H1 (cell line): ENCODE measurements at regions of chr17 and their contacts with region 1.

Region 1: DNA sequence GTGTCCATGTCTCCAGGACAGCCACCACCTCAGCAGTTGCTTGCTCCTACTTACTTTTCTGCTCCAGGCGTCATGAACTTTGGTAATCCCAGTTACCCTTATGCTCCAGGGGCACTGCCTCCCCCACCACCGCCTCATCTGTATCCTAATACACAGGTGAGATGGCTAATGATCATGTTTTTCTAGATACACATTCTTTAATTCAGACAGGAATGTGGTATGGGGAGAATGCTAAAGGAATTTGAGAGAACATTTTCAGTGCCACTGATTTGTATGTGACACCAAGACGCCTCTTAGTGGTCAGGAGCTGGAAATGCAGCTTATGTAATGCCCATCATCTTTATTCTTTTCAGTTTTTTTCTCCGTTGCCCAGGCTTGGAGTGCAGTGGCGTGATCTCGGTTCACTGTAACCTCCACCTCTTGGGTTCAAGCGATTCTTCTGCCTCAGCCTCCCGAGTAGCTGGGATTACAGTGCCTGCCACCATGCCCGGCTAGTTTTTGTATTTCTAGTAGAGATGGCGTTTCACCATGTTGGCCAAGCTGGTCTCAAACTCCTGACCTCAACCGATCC is 8.9 kb upstream of the RAPGEFL1 start:
- DNase-seq: peak in 1 of 2 experiments; percentile 59
- H3K4me3 ChIP-seq: no peak overlapping the region
- H3K27ac ChIP-seq: 0 out of 2 replicates have a peak overlapping the region, but pooled peaks have one; percentile 62
- H3K4me1 ChIP-seq: peaks cover 0 to 6% (median 0%) of the 10 kb centered on the region in 4 experiments; a peak in 2 of 7 replicates
- H3K27me3 ChIP-seq: no peaks in the 10 kb centered on the region
- CTCF ChIP-seq: peak in 2 of 3 experiments; percentile 51 to 77; a peak in 3 of 4 replicates
- EP300 ChIP-seq: peak in 1 of 2 experiments; percentile 36; a peak in 1 of 3 replicates
- POLR2A ChIP-seq: no peak
- RAD21 ChIP-seq: peak; percentile 59 to 63

Region 2: DNA sequence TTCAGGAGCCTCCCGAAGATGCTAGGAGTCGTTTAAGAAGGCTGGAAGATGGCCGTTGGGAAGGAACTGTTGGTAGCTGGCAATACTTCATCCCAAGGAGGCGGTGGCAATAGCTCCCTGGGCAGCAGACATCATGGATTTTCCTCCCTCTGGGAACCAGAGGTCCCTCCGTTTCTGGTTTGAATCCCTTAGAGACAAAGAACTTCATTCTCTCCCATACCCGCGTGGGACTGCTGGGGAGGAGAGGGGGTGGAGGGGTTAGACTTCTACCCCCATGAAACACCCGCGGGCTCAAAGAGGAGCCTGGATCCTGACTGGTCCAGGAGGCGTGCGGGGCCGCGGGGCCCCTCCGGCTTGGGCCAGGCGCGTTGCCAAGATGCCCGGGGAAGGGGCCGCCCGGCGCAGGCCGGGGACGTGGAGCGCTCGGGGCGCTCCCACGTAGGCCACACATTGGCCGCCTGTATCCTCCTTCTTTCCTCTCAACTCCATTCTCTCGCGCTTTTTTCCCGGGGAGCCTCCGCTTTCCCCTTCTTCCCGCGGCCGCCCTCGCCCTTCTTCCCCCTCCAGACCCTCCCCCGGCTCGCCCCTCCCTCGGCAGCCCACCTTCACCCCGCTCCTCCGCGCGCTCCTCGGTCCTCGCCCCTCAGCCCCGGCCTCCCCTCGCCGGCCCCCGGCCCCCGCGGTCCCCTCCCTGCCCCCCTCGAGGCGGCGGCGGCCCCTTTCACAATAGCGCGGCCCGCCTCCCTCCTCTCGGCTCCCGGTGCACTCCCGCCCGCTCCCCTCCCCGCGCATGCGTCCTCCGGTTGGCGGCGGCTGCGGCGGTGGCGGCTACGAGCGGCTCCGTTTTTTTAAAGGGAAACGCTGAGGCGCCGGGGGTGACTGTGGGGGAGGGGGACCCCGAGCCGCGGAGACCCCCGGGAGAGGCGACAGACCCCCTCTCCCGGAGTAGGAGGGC is 46.9 kb before region 1 on chr17 and contains the start of gene MSL1:
- CTCF ChIA-PET with region 1: interaction called, 8 read pairs
- POLR2A ChIA-PET with region 1: interaction called, 22 read pairs
- DNase-seq: peak in 1 of 2 experiments; percentile 88
- H3K4me3 ChIP-seq: peak within 1 kb of the TSS; percentile 80 to 91 (median 86)
- H3K27ac ChIP-seq: peak within 1 kb of the TSS; percentile 84
- H3K4me1 ChIP-seq: peaks cover 0 to 3% (median under 1%) of the 10 kb centered on the region in 4 experiments; a peak in 2 of 7 replicates
- H3K27me3 ChIP-seq: no peaks in the 10 kb centered on the region; a peak in 1 of 7 replicates
- CTCF ChIP-seq: no peak
- EP300 ChIP-seq: 0 out of 3 replicates have a peak, but pooled peaks of 1 of the 2 experiments have one; percentile 8
- POLR2A ChIP-seq: peak in 1 of 2 experiments; percentile 37; a peak in 1 of 3 replicates
- RAD21 ChIP-seq: no peak
- total RNA-seq, gene MSL1: 66.5 and 69.2 TPM in 2 replicates

Region 3: DNA sequence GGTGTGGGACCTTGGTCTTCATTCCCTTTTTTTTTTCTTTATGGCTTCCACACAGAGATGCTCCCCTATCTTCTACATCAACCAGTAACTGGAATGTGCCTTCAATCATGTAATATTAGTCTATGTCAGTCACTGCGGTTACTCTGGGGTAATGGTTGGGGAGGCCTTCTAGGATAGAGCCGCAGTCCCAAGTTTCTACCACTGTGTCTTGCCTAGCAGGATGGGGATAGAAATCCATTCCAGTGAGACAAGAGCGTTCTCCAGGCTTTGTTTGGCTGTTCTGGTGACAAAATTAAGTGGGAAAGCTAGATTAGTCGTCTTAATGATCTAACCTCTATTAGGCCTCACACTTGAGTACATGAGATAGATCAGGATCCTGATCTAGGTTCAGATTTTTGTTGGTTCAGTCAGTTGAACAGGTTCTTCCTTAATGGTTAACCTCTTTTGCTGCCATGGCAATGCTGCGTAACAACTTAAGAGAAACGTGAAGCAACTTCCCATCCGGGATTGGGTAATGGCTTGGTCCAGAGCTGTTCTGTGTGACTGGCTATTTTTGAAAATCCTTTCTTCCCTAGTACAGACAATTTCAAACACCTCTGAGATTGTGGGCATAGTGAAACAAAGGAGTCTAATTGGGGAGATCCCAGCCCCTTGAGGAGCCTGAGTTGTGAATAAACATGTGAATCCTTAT is 37.9 kb before region 1 on chr17:
- CTCF ChIA-PET with region 1: interaction called, 8 read pairs
- POLR2A ChIA-PET with region 1: interaction called, 11 read pairs
- DNase-seq: no peak
- H3K4me3 ChIP-seq: no peak overlapping the region
- H3K27ac ChIP-seq: no peak overlapping the region
- H3K4me1 ChIP-seq: no peaks in the 10 kb centered on the region
- H3K27me3 ChIP-seq: no peaks in the 10 kb centered on the region
- CTCF ChIP-seq: no peak
- EP300 ChIP-seq: no peak
- POLR2A ChIP-seq: no peak
- RAD21 ChIP-seq: no peak

Region 4: GRCh38 chr17:40139566-40140058 is 28.7 kb before region 1 on chr17:
- CTCF ChIA-PET with region 1: interaction called, 9 read pairs
- POLR2A ChIA-PET with region 1: interaction called, 20 read pairs
- DNase-seq: no peak
- H3K4me3 ChIP-seq: peak overlapping the region; percentile 51 to 88 (median 68)
- H3K27ac ChIP-seq: peak overlapping the region; percentile 84
- H3K4me1 ChIP-seq: peaks cover 0 to 4% (median 1%) of the 10 kb centered on the region in 4 experiments; a peak in 2 of 7 replicates
- H3K27me3 ChIP-seq: no peaks in the 10 kb centered on the region
- CTCF ChIP-seq: no peak
- EP300 ChIP-seq: no peak
- POLR2A ChIP-seq: no peak
- RAD21 ChIP-seq: no peak

Region 5: DNA sequence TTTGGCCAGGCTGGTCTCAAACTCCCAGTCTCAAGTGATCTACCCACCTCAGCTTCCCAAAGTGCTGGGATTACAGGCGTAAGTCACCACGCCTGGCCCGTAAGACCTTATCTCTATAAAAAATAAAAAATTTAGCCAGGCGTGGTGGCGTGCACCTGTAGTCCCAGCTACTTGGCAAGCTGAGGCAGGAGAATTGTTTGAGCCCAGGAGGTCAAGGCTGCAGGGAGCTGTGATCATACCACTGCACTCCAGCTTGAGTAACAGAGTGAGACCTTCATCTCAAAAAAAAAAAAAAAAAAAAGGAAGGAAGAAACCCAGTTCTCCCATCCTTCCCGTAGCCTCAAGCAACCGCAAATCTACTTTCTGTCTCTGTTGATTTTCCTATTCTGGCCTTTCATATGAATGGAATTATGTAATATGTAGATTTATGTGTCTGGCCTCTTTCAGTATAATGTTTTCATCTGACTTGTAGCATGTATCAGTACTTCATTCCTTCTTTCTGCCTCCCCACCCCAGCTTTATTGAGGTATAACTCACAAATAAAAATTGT is 16.9 kb before region 1 on chr17:
- CTCF ChIA-PET with region 1: interaction called, 48 read pairs
- POLR2A ChIA-PET with region 1: interaction called, 10 read pairs
- DNase-seq: no peak
- H3K4me3 ChIP-seq: no peak overlapping the region
- H3K27ac ChIP-seq: no peak overlapping the region
- H3K4me1 ChIP-seq: no peaks in the 10 kb centered on the region
- H3K27me3 ChIP-seq: no peaks in the 10 kb centered on the region
- CTCF ChIP-seq: no peak
- EP300 ChIP-seq: no peak
- POLR2A ChIP-seq: no peak
- RAD21 ChIP-seq: no peak

Region 6: GRCh38 chr17:40157973-40158372 is 10.4 kb before region 1 on chr17:
- CTCF ChIA-PET with region 1: interaction called, 48 read pairs
- POLR2A ChIA-PET with region 1: interaction called, 10 read pairs
- DNase-seq: no peak
- H3K4me3 ChIP-seq: no peak overlapping the region
- H3K27ac ChIP-seq: no peak overlapping the region
- H3K4me1 ChIP-seq: no peaks in the 10 kb centered on the region
- H3K27me3 ChIP-seq: no peaks in the 10 kb centered on the region
- CTCF ChIP-seq: no peak
- EP300 ChIP-seq: no peak
- POLR2A ChIP-seq: no peak
- RAD21 ChIP-seq: no peak

Region 7: DNA sequence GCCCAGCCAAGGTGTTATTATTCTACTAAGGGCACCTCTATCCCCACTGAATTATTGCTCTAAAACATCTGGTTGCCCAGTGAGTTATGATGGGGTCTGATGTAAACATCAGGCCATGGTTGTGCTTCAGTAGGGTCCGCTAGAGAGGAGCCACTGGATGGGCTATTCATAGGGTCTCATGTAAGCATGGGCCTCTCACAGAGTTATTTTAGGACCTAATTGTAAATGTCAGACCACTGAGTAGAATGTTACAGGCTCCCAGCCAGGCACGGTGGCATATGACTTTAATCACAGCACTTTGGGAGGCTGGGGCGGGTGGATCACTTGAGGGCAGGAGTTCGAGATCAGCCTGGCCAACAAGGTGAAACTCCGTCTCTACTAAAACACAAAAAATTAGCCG is 14.3 kb after region 1 on chr17:
- CTCF ChIA-PET with region 1: interaction called, 18 read pairs
- POLR2A ChIA-PET with region 1: interaction called, 14 read pairs
- DNase-seq: no peak
- H3K4me3 ChIP-seq: no peak overlapping the region
- H3K27ac ChIP-seq: no peak overlapping the region
- H3K4me1 ChIP-seq: peaks cover 3 to 12% (median 8%) of the 10 kb centered on the region in 4 experiments; a peak in 6 of 7 replicates
- H3K27me3 ChIP-seq: no peaks in the 10 kb centered on the region
- CTCF ChIP-seq: no peak
- EP300 ChIP-seq: no peak
- POLR2A ChIP-seq: no peak
- RAD21 ChIP-seq: no peak

Region 8: DNA sequence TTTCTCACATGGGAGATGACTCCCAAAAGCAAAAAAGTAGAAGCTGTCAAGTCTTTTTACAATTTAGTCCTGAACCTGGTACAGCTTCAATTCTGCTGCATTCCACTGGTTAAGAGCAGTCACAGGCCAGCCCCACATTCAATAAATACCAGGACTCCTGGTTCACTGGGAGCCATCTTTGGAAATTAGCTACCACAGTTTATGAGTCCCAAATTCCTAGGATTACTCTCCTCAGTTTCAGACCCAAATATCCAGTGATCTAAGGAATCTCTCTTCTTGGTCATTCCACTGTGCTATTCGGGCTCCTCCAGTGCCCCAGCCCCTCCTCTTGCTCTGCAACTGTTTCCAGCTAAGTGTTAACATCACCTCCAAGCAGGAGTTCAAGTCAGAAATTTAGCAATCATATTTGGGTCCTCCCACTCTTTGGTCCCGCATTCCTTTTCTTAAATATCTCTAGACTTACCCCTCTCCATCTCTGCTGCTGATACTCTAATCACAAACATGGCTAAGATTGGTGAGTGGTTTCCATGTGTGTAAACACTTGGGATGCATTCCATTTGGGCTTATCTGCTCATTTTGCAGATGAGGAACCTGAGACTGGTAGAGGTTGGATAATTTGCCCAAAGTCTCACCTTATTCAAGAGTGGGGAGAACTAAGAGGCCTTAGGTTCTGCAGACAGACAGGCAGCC is 41.2 kb after region 1 on chr17:
- CTCF ChIA-PET with region 1: no interaction called
- POLR2A ChIA-PET with region 1: no interaction called
- DNase-seq: no peak
- H3K4me3 ChIP-seq: no peak overlapping the region
- H3K27ac ChIP-seq: no peak overlapping the region
- H3K4me1 ChIP-seq: no peaks in the 10 kb centered on the region
- H3K27me3 ChIP-seq: no peaks in the 10 kb centered on the region
- CTCF ChIP-seq: no peak
- EP300 ChIP-seq: no peak
- POLR2A ChIP-seq: no peak
- RAD21 ChIP-seq: no peak

Region 9: DNA sequence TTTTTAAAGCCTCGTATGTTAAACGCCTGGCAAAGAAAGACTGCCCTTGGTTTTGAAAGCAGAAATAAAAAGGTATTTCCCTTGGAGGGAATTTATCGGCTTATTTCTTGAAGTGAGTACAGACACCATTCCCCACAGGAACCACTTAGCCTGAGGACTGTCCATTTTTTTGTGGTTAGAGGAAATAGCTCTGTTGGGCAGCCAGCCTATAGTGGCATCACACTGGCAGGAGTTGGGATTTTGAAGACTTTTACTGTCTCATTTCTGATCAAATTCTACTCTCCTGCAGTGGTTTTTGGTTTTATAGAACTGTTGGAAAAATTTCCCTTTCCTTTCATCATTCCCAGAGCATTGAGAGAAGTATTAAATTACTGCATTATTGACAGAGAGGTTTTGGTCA is 85.2 kb after region 1 on chr17:
- CTCF ChIA-PET with region 1: no interaction called
- POLR2A ChIA-PET with region 1: no interaction called
- DNase-seq: no peak
- H3K4me3 ChIP-seq: no peak overlapping the region
- H3K27ac ChIP-seq: no peak overlapping the region
- H3K4me1 ChIP-seq: no peaks in the 10 kb centered on the region
- H3K27me3 ChIP-seq: no peaks in the 10 kb centered on the region
- CTCF ChIP-seq: no peak
- EP300 ChIP-seq: no peak
- POLR2A ChIP-seq: no peak
- RAD21 ChIP-seq: no peak

Region 10: GRCh38 chr17:40322356-40323315 is 154.3 kb after region 1 on chr17:
- CTCF ChIA-PET with region 1: no interaction called
- POLR2A ChIA-PET with region 1: no interaction called
- DNase-seq: no peak
- H3K4me3 ChIP-seq: no peak overlapping the region
- H3K27ac ChIP-seq: no peak overlapping the region
- H3K4me1 ChIP-seq: peaks cover 0 to 23% (median 16%) of the 10 kb centered on the region in 4 experiments; a peak in 6 of 7 replicates
- H3K27me3 ChIP-seq: peaks cover 0 to 14% (median 6%) of the 10 kb centered on the region in 4 experiments; a peak in 5 of 7 replicates
- CTCF ChIP-seq: no peak
- EP300 ChIP-seq: no peak
- POLR2A ChIP-seq: no peak
- RAD21 ChIP-seq: no peak

Region 11: DNA sequence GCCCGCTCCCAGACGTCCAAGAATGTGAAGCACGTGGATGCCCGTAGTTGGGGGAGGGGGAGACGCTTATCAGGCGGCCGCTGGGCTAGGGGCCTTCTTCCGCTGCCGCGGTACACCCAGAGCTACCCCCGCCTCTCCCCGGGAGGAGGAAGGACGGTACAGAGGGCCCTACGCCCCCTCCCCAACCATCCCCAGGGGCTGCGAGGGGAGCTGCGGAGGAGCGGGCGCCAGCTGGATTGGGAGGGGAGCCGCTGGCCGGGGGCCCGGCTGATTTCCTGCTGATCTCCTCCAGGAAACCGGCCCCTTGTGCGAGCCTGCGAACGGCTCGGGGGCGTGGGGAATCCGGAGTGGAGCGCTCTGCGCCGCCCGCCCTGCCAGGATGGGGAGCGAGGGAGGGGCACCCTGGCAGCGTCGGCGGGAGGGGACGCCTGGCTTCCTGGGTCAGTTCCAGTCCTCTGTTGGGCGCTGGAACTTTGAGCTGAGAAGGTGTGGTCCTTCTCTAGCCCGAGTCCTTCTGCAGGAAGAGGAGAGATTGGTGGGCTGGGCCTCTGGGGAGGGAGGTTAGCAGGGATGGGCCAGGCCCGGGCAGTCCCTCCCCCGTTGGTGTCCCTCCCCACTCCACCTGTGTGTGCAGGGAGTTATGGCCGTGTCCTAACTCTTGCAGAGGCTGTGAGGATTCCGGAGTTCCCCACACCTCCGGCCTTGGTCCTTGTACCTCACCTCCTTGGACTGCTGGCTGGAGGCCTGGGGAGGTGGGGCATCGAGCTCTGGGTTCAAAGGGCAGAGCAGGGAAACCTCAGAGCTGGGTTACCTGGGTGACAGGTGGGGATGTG is 177.0 kb after region 1 on chr17:
- CTCF ChIA-PET with region 1: no interaction called
- POLR2A ChIA-PET with region 1: no interaction called
- DNase-seq: peak in 1 of 2 experiments; percentile 87
- H3K4me3 ChIP-seq: peak overlapping the region; percentile 30 to 69 (median 45); a peak in 7 of 8 replicates
- H3K27ac ChIP-seq: no peak overlapping the region
- H3K4me1 ChIP-seq: peaks cover 21 to 63% (median 52%) of the 10 kb centered on the region in 4 experiments
- H3K27me3 ChIP-seq: peaks cover 19 to 85% (median 66%) of the 10 kb centered on the region in 4 experiments
- CTCF ChIP-seq: no peak
- EP300 ChIP-seq: peak in 1 of 2 experiments; percentile 35; a peak in 1 of 3 replicates
- POLR2A ChIP-seq: no peak; a peak in 1 of 3 replicates
- RAD21 ChIP-seq: no peak